ENCODE measurements at regions of chr17 and their contacts with region 1.

Region 1: DNA sequence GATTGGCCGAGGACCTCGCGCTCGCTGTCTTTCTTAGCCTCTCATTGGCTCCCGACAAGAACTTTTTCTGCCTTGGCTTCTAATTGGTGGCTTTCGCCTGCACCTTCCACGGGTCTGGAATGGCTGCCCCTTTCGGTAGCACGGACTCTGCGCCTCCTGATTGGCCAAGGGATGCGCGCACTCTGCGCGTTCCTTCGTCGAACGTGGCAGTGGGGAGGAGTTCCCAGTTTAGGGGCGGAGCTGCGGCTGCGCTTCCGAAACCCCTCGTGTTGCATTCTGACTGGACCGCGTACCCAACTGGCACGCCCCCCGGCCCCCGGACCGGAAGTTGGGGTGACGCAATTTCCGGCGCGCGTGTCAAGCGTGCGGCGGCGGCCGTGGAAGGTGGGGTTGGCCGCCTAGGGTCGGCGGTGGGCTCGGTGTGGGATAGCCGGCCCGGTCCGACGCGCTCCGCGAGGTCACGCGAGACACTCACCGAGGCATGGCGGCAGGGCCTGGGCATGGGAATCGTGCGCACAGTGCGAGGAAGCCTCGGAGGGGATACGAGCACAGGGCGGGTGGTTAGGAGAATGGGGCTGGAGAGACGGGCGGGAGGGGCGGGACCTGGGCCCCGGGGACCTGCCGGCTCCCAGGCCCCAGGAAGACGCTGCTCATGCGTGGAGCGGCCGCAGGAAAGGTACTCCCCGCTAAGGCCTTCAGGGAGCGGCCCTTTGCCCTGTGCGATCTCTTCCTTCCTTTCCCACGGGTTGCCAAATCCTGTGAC is 602 bp upstream of the P4HB start:
- DNase-seq: peak; percentile 100
- H3K4me3 ChIP-seq: peak overlapping the region; percentile 52 to 94 (median 79)
- H3K27ac ChIP-seq: peak overlapping the region; percentile 74
- H3K4me1 ChIP-seq: peaks cover 27% of the 10 kb centered on the region
- H3K27me3 ChIP-seq: no peaks in the 10 kb centered on the region
- CTCF ChIP-seq: no peak

Region 2: GRCh38 chr17:81683584-81684237 is 177.2 kb before region 1 on chr17 and contains the starts of genes ARL16 and HGS:
- CTCF ChIA-PET with region 1: no interaction called
- dilution Hi-C with region 1: no loop called
- in situ Hi-C with region 1: no loop called
- intact Hi-C with region 1: loop called (anchors 5 kb)
- DNase-seq: peak; percentile 99
- H3K4me3 ChIP-seq: peak within 1 kb of the TSS; percentile 76 to 94 (median 92)
- H3K27ac ChIP-seq: peak within 1 kb of the TSS; percentile 78
- H3K4me1 ChIP-seq: peaks cover 19% of the 10 kb centered on the region
- H3K27me3 ChIP-seq: no peaks in the 10 kb centered on the region
- CTCF ChIP-seq: no peak
- total RNA-seq, gene ARL16: 19.5 to 27.7 TPM
- total RNA-seq, gene HGS: 88.0 to 140 TPM

Region 3: GRCh38 chr17:81733507-81734404 is 127.2 kb before region 1 on chr17:
- CTCF ChIA-PET with region 1: interaction called, 4 read pairs
- dilution Hi-C with region 1: no loop called
- in situ Hi-C with region 1: no loop called
- intact Hi-C with region 1: loop called (anchors 1 kb)
- DNase-seq: peak; percentile 63
- H3K4me3 ChIP-seq: no peak overlapping the region
- H3K27ac ChIP-seq: no peak overlapping the region
- H3K4me1 ChIP-seq: peaks cover 11% of the 10 kb centered on the region
- H3K27me3 ChIP-seq: no peaks in the 10 kb centered on the region
- CTCF ChIP-seq: peak; percentile 80 to 96

Region 4: GRCh38 chr17:81821603-81822311 is 39.2 kb before region 1 on chr17:
- CTCF ChIA-PET with region 1: no interaction called
- dilution Hi-C with region 1: no loop called
- in situ Hi-C with region 1: no loop called
- intact Hi-C with region 1: loop called (anchors 1 kb)
- DNase-seq: peak; percentile 54
- H3K4me3 ChIP-seq: no peak overlapping the region
- H3K27ac ChIP-seq: no peak overlapping the region
- H3K4me1 ChIP-seq: peaks cover 13% of the 10 kb centered on the region
- H3K27me3 ChIP-seq: no peaks in the 10 kb centered on the region
- CTCF ChIP-seq: peak; percentile 58 to 76

Region 5: DNA sequence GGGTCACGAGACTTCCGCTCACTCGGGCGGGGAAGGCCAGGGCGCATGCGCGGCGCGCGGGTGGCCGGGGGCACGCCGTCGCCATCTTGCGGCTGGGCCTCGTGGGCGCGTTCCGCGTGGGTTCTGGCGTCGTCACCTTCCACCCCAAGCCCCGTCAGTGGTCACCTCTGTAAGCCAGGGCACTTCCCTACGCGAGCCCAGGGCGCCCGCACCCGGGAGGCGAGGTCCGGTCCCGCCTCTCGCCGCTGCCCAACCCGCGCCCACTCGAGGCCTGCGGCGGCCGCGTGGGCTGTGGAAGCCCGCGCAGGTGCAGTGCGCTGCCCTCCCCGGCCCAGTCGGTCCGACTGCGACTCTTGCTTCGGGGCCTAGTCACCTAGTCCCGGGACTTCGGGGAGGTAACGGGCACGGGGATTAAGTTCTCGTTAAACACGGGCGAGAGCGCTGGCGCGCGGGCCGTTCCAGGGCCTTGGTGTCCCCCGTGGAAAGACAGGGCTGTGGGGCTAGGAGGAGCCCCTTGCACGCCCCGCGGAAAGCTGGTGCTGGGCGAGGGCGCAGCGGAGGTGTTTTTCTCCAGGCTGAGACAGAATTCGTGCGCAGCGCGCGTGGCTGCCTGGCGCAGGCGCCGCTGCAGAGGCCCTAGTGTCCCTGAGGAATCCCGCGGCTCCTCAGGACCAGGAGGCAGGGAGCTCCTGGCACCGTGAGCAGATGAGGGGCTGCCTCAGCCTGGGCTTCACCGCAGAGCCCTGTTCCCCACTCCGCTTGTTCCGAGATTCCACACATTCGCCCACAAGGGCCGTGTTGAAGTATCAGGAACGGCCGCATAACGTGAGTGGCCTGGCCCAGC is 10.7 kb after region 1 on chr17:
- CTCF ChIA-PET with region 1: no interaction called
- dilution Hi-C with region 1: no loop called
- in situ Hi-C with region 1: no loop called
- intact Hi-C with region 1: loop called (anchors 1 kb)
- DNase-seq: peak; percentile 82
- H3K4me3 ChIP-seq: peak overlapping the region; percentile 64 to 88 (median 75)
- H3K27ac ChIP-seq: peak overlapping the region; percentile 86
- H3K4me1 ChIP-seq: peaks cover 33% of the 10 kb centered on the region
- H3K27me3 ChIP-seq: no peaks in the 10 kb centered on the region
- CTCF ChIP-seq: peak in 1 of 2 donors; percentile 42

Region 6: GRCh38 chr17:81929821-81930731 is 69.1 kb after region 1 on chr17:
- CTCF ChIA-PET with region 1: no interaction called
- dilution Hi-C with region 1: no loop called
- in situ Hi-C with region 1: no loop called
- intact Hi-C with region 1: no loop called
- DNase-seq: no peak
- H3K4me3 ChIP-seq: no peak overlapping the region
- H3K27ac ChIP-seq: no peak overlapping the region
- H3K4me1 ChIP-seq: peaks cover 20% of the 10 kb centered on the region
- H3K27me3 ChIP-seq: no peaks in the 10 kb centered on the region
- CTCF ChIP-seq: no peak

Region 7: GRCh38 chr17:81967533-81968395 is 106.8 kb after region 1 on chr17:
- CTCF ChIA-PET with region 1: no interaction called
- dilution Hi-C with region 1: no loop called
- in situ Hi-C with region 1: no loop called
- intact Hi-C with region 1: no loop called
- DNase-seq: no peak
- H3K4me3 ChIP-seq: no peak overlapping the region
- H3K27ac ChIP-seq: no peak overlapping the region
- H3K4me1 ChIP-seq: peaks cover 6% of the 10 kb centered on the region
- H3K27me3 ChIP-seq: no peaks in the 10 kb centered on the region
- CTCF ChIP-seq: no peak